ENCODE measurements at regions of chr3 and their contacts with region 1.

Region 1: DNA sequence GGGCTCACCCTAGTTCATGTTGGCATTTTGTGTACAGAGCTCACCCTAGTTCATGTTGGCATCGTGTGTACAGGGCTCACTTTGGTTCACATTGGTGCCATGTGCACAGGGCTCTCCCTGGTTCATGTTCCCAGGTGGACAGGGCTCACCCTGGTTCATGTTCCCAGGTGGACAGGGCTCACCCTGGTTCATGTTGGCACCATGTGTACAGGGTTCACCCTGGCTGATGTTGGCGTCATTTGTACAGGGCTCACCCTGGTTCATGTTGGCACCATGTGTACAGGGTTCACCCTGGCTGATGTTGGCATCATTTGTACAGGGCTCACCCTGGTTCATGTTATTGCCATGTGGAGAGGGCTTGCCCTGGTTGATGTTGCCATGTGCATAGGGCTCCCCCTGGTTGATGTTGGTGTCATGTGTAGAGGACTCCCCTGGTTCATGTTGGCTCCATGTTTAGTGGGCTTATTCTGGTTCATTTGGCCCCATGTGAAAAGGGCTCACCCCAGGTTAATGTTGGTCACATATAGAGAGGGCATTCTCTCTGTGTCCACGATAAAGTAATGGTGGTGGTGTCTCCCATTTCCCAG is 31.7 kb upstream of the NR2C2 start:
- DNase-seq: no peak
- H3K4me3 ChIP-seq: no peak overlapping the region
- H3K27ac ChIP-seq: no peak overlapping the region
- H3K4me1 ChIP-seq: no peaks in the 10 kb centered on the region
- H3K27me3 ChIP-seq: no peaks in the 10 kb centered on the region
- CTCF ChIP-seq: no peak
- EP300 ChIP-seq: no peak
- POLR2A ChIP-seq: no peak

Region 2: GRCh38 chr3:14508961-14509795 is 406.6 kb before region 1 on chr3:
- intact Hi-C with region 1: loop called in 2 of 4 experiments (anchors 2 to 10 kb)
- DNase-seq: peak; percentile 74 to 87 (median 84)
- H3K4me3 ChIP-seq: no peak overlapping the region
- H3K27ac ChIP-seq: peak overlapping the region in 1 of 2 donors; percentile 47
- H3K4me1 ChIP-seq: no peaks in the 10 kb centered on the region
- H3K27me3 ChIP-seq: no peaks in the 10 kb centered on the region
- CTCF ChIP-seq: peak; percentile 78 to 91 (median 83)
- EP300 ChIP-seq: no peak
- POLR2A ChIP-seq: no peak

Region 3: DNA sequence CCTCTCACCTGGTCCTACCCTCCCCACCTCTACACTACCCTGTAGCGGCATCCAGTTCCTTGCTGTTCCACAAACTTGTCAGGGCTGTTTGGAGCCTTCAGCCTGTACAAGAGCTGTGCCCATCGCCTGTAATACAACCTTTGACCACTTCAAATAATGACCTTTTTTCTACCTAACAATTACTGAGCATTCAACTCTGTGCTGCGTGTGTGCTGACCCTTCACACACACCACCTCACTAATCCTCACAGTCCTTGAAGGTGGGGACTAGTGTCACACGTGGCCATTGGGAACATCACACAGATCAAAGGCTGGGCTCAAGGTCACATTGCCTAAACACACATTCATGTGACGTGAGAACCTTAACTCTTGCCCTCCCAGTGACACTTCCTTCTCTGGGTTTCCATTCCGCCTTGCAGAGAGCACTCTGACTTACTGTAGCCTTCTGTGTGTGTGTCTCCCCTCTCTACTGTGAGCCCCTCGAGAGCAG is 237.7 kb before region 1 on chr3:
- intact Hi-C with region 1: loop called (anchors 2 to 5 kb)
- DNase-seq: no peak
- H3K4me3 ChIP-seq: no peak overlapping the region
- H3K27ac ChIP-seq: no peak overlapping the region
- H3K4me1 ChIP-seq: no peaks in the 10 kb centered on the region
- H3K27me3 ChIP-seq: no peaks in the 10 kb centered on the region
- CTCF ChIP-seq: no peak
- EP300 ChIP-seq: no peak
- POLR2A ChIP-seq: no peak

Region 4: GRCh38 chr3:14791343-14791945 is 124.3 kb before region 1 on chr3:
- intact Hi-C with region 1: loop called (anchors 5 to 10 kb)
- DNase-seq: peak; percentile 46 to 77 (median 74)
- H3K4me3 ChIP-seq: no peak overlapping the region
- H3K27ac ChIP-seq: no peak overlapping the region
- H3K4me1 ChIP-seq: peaks cover 8% of the 10 kb centered on the region
- H3K27me3 ChIP-seq: no peaks in the 10 kb centered on the region
- CTCF ChIP-seq: peak; percentile 34 to 61 (median 38)
- EP300 ChIP-seq: no peak
- POLR2A ChIP-seq: no peak